Heart left ventricle (tissue), 16 donors: ENCODE measurements at regions of chr11 and their contacts with region 1.

Region 1: GRCh38 chr11:2526808-2527381 is 82.1 kb downstream of the KCNQ1 start:
- DNase-seq: peak; percentile 51 to 81 (median 60)
- ATAC-seq: peak in 2 of 4 donors; percentile 24 to 51
- H3K4me3 ChIP-seq: peak overlapping the region in 5 of 12 donors; percentile 2 to 33 (median 23)
- H3K27ac ChIP-seq: peak overlapping the region in 3 of 12 donors; percentile 17 to 52 (median 29)
- H3K4me1 ChIP-seq: peaks cover 0 to 30% (median 10%) of the 10 kb centered on the region in 12 donors
- H3K27me3 ChIP-seq: no peaks in the 10 kb centered on the region
- CTCF ChIP-seq: peak in 3 of 12 donors; percentile 6 to 24 (median 19)
- POLR2A ChIP-seq: no peak

Region 2: DNA sequence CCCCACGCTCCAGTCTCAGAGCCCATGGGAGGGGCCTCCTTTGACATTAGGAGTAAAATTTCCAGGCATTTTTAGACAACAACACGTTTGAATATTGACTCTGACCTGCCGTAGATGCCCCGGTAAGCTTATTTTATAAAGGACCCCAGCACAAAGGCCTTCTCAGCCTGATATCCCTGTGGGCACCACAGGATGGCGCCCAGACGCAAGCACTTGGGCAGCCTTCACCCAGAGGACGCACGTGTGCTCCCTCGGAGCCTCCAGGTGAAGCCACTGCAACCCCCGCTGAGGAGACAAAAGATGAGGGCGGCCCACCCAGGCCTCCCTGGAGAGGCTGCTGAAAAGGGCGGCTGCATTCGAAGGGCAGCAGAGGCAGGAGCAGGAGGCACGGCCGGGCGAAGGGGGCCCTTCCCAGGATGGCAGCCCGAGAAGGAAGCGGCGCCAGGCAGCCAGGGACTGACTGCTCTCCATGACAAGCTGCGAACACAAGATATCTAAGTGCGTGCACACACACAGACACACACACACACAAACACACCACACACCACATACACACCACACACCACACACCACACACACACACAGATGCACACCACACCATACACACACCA is 340.1 kb before region 1 on chr11:
- intact Hi-C with region 1: loop called in 5 of 10 experiments (anchors 10 kb)
- DNase-seq: no peak
- ATAC-seq: peak in 3 of 4 donors; percentile 52 to 72 (median 59)
- H3K4me3 ChIP-seq: no peak overlapping the region
- H3K27ac ChIP-seq: no peak overlapping the region
- H3K4me1 ChIP-seq: peaks cover 0 to 18% (median 0%) of the 10 kb centered on the region in 12 donors
- H3K27me3 ChIP-seq: peaks cover 0 to 32% (median 6%) of the 10 kb centered on the region in 9 donors
- CTCF ChIP-seq: peak; percentile 41 to 62 (median 53)
- POLR2A ChIP-seq: no peak

Region 3: DNA sequence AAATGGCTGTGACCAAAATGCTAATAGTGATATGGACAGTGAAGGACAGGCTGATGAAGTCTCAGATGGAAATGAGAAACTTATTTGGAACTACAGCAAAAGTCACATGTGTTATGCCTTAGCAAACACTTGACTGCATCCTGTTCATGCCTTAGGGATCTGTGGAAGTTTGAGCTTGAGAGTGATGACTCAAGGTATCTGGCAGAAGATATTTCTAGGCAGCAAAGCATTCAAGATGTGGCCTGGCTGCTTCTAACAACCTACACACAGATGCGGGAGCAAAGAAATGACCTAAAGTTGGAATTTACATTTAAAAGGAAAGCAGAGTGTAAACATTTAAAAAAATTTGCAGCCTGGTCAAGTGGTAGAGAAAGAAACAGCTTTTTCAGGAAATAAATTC is 177.9 kb before region 1 on chr11:
- intact Hi-C with region 1: no loop called
- DNase-seq: no peak
- ATAC-seq: no peak
- H3K4me3 ChIP-seq: no peak overlapping the region
- H3K27ac ChIP-seq: no peak overlapping the region
- H3K4me1 ChIP-seq: no peaks in the 10 kb centered on the region
- H3K27me3 ChIP-seq: no peaks in the 10 kb centered on the region
- CTCF ChIP-seq: no peak
- POLR2A ChIP-seq: no peak

Region 4: DNA sequence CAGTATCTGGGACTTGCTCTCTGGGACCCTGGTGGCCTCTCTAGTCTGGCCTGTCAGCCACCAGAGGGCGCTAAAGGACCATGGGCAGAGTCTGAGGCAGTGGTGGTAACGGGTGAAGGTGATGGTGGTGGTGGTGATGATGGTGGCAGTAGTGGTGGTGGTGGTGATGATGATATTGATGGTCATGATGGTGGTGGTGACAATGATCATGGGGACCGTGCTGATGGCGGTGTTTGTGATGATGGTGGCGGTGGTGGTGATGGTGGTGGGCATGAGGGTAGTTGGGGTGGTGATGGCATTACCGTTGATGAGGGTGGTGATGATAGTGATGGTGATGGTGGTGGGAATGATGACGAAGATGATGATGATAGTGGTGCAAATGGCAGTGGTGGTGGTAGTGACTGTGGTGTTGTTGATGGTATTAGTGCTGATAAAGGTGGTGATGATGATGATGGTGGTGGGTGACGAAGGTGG is 98.5 kb before region 1 on chr11:
- intact Hi-C with region 1: loop called (anchors 1 kb)
- DNase-seq: peak; percentile 67 to 89 (median 78)
- ATAC-seq: peak; percentile 73 to 91 (median 78)
- H3K4me3 ChIP-seq: no peak overlapping the region
- H3K27ac ChIP-seq: no peak overlapping the region
- H3K4me1 ChIP-seq: no peaks in the 10 kb centered on the region
- H3K27me3 ChIP-seq: no peaks in the 10 kb centered on the region
- CTCF ChIP-seq: peak; percentile 71 to 87 (median 84)
- POLR2A ChIP-seq: no peak

Region 5: GRCh38 chr11:2444821-2445745 is 81.8 kb before region 1 on chr11 and contains the start of gene KCNQ1:
- intact Hi-C with region 1: loop called in 1 of 10 experiments (anchors 5 kb)
- DNase-seq: peak; percentile 55 to 84 (median 69)
- ATAC-seq: peak in 3 of 4 donors; percentile 60 to 85 (median 79)
- H3K4me3 ChIP-seq: peak within 1 kb of the TSS; percentile 11 to 68 (median 53)
- H3K27ac ChIP-seq: peak within 1 kb of the TSS in 9 of 12 donors; percentile 15 to 69 (median 49)
- H3K4me1 ChIP-seq: peaks cover 5 to 49% (median 33%) of the 10 kb centered on the region in 12 donors
- H3K27me3 ChIP-seq: peaks cover 0 to 9% (median 0%) of the 10 kb centered on the region in 9 donors
- CTCF ChIP-seq: peak in 1 of 12 donors; percentile 8
- POLR2A ChIP-seq: peak; percentile 43 to 59
- total RNA-seq, gene KCNQ1: 18.6 to 42.4 (median 38.4) TPM

Region 6: DNA sequence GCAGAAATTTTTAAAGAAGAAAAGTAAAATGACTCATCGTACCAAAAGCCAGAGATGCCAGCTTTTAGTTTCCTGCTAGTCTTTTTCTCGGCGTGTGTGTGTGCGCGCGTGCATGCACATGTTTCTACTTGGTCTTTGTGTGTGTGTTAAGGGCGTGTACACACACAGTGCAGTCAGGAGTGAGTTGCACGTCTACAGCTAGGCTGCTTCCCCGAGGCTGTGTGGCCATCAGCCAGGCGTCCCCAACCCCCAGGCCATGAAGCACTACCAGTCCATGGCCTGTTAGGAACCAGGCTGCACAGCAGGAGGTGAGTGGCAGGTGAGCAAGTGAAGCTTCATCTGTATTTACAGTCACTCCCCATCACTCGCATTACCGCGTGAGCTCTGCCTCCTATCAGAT is 45.6 kb before region 1 on chr11:
- intact Hi-C with region 1: no loop called
- DNase-seq: peak in 1 of 5 donors; percentile 32
- ATAC-seq: no peak
- H3K4me3 ChIP-seq: no peak overlapping the region
- H3K27ac ChIP-seq: peak overlapping the region in 1 of 12 donors; percentile 79
- H3K4me1 ChIP-seq: peaks cover 0 to 39% (median 19%) of the 10 kb centered on the region in 12 donors
- H3K27me3 ChIP-seq: no peaks in the 10 kb centered on the region
- CTCF ChIP-seq: no peak
- POLR2A ChIP-seq: no peak

Region 7: GRCh38 chr11:2674658-2675131 is 147.8 kb after region 1 on chr11:
- intact Hi-C with region 1: no loop called
- DNase-seq: peak in 1 of 5 donors; percentile 11
- ATAC-seq: no peak
- H3K4me3 ChIP-seq: no peak overlapping the region
- H3K27ac ChIP-seq: peak overlapping the region in 1 of 12 donors; percentile 65
- H3K4me1 ChIP-seq: peaks cover 0 to 45% (median 24%) of the 10 kb centered on the region in 12 donors
- H3K27me3 ChIP-seq: no peaks in the 10 kb centered on the region
- CTCF ChIP-seq: no peak
- POLR2A ChIP-seq: no peak